Activated T-helper 2 cell treated with anti-CD3 and anti-CD28 coated beads, Interferon-gamma antibody, Interleukin-2, Interleukin-4, amounts not matched to agents 10 μg/mL and 5 μg/mL and 100 μg/mL, durations not matched to agents 14 hours and 24 hours and 36 hours (primary cell): ENCODE measurements at regions of chr5 and their contacts with region 1.

Region 1: DNA sequence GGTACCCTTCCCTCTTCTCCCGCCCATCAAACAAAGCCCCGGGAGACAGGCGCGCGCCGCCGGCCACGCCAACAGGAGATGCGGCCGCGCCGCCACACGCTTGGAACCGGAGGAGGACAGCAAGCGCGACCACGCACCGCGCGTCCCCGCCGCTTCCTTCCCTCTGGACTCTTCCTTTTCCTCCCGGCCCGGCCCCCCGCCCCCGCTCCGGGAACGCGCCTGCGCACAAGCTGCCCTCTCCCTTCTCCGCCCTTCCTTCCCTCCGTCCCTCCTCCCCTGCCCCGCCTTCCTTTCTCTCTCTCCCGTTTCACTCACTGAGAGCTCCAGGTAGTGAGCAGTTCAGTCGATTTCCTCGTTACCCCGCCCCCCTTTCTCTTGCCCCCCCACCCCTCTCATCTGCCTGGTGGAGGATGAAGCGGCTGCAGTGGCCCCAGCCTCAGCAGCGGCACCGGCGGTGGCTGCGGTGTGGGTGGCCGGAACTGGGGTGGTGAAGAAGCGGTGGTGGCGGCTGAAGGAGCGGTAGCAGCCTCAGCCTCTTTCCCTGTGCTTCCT is at the start of gene RASA1:
- DNase-seq: peak; percentile 74
- H3K4me3 Mint-ChIP-seq: peak within 1 kb of the TSS; percentile 94
- H3K27ac Mint-ChIP-seq: peak within 1 kb of the TSS; percentile 90
- H3K4me1 Mint-ChIP-seq: peaks cover 25% of the 10 kb centered on the region
- H3K27me3 Mint-ChIP-seq: peaks cover 4% of the 10 kb centered on the region
- total RNA-seq, gene RASA1: 21.1 and 21.9 TPM in 2 replicates

Region 2: DNA sequence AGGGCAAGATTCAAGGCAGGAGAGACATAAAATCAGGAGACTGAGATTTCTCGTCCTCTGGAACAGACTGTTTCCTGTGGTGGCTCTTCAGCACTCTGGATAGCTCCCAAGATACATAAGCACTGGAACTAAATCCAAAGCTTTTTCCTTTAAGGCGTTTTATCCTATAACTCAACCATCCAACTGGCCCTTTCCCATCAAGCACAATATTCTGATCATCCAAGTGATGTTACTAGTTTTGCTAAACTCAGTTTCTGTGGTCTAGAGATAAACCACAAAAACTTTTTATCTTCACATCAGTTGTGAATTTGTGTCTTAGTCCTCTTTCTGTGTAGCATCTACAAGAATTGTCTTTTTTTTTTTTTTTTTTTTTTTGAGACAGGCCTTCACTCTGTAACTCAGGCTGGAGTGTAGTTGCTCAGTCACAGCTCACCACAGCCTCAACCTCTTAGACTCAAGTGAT is 350.5 kb before region 1 on chr5:
- intact Hi-C with region 1: loop called (anchors 5 kb)
- DNase-seq: peak; percentile 8
- H3K4me3 Mint-ChIP-seq: no peak overlapping the region
- H3K27ac Mint-ChIP-seq: no peak overlapping the region
- H3K4me1 Mint-ChIP-seq: peaks cover 19% of the 10 kb centered on the region
- H3K27me3 Mint-ChIP-seq: peaks cover 27% of the 10 kb centered on the region

Region 3: GRCh38 chr5:87081511-87082372 is 185.9 kb before region 1 on chr5:
- intact Hi-C with region 1: loop called (anchors 5 kb)
- DNase-seq: peak; percentile 30
- H3K4me3 Mint-ChIP-seq: peak overlapping the region; percentile 41
- H3K27ac Mint-ChIP-seq: peak overlapping the region; percentile 54
- H3K4me1 Mint-ChIP-seq: peaks cover 41% of the 10 kb centered on the region
- H3K27me3 Mint-ChIP-seq: no peaks in the 10 kb centered on the region

Region 4: GRCh38 chr5:87243166-87243844 is 24.3 kb before region 1 on chr5:
- intact Hi-C with region 1: no loop called
- DNase-seq: no peak
- H3K4me3 Mint-ChIP-seq: no peak overlapping the region
- H3K27ac Mint-ChIP-seq: no peak overlapping the region
- H3K4me1 Mint-ChIP-seq: peaks cover 2% of the 10 kb centered on the region
- H3K27me3 Mint-ChIP-seq: no peaks in the 10 kb centered on the region

Region 5: GRCh38 chr5:87282269-87282668 is 14.6 kb after region 1 on chr5:
- intact Hi-C with region 1: loop called (anchors 2 kb)
- DNase-seq: no peak
- H3K4me3 Mint-ChIP-seq: peak overlapping the region; percentile 64
- H3K27ac Mint-ChIP-seq: peak overlapping the region; percentile 74
- H3K4me1 Mint-ChIP-seq: peaks cover 40% of the 10 kb centered on the region
- H3K27me3 Mint-ChIP-seq: no peaks in the 10 kb centered on the region

Region 6: GRCh38 chr5:87300744-87301143 is 33.1 kb after region 1 on chr5:
- intact Hi-C with region 1: loop called (anchors 1 kb)
- DNase-seq: no peak
- H3K4me3 Mint-ChIP-seq: no peak overlapping the region
- H3K27ac Mint-ChIP-seq: no peak overlapping the region
- H3K4me1 Mint-ChIP-seq: peaks cover 57% of the 10 kb centered on the region
- H3K27me3 Mint-ChIP-seq: no peaks in the 10 kb centered on the region

Region 7: DNA sequence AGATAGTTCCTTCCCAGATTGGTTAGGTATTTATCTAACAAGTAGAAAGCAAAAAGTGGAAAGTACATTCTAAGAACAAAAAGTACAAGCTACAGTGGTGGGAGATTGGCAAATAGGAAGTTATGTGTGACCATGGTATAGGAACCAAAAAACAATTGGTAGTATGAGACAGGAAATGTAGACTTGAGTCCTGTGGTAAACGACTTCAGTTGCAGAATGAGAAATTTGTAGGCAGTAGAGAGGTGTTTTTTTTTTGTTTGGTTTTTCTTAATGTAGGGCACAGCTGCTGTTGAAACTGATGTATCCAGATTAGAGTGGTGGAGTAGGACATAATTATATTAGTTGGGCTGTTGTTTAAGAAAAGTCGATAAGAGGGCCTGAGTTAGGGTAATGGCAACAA is 73.1 kb after region 1 on chr5:
- intact Hi-C with region 1: loop called (anchors 1 kb)
- DNase-seq: no peak
- H3K4me3 Mint-ChIP-seq: peak overlapping the region; percentile 64
- H3K27ac Mint-ChIP-seq: peak overlapping the region; percentile 82
- H3K4me1 Mint-ChIP-seq: peaks cover 27% of the 10 kb centered on the region
- H3K27me3 Mint-ChIP-seq: no peaks in the 10 kb centered on the region

Region 8: DNA sequence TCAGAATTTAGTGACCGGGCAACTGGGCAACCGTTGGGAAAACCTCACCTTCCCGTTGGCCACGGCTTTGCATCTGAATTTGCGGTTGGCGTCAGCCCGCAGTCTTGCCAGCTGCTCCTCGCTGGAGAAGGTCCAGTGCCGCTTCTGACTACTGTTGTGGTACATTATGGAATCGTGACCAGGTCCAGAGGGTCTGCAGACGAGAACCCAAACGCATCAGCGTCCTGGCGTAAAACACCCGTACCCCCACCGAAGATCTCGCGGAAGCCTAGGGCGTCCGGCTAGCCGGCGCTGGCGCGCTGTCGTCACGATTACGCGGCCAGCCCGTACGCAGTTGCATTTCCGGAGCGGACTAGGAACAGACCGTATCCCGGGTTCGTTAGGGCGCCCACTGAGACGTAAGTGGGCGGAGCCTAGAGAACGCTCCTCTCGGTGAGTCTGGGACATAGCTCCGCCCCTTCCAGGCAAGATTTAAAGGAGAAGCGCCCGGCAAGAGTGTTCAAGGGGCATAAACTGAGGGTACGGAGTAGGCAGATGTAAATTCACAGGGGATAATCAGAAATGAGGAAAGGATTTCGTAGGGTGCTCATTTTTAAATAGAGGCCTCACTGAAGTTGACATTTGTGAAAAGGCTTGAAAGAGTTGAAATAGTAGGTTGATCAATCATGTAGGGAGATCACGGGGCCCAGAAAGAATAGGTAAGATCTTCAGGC is 145.1 kb after region 1 on chr5 and contains the start of gene CCNH:
- intact Hi-C with region 1: loop called (anchors 2 kb)
- DNase-seq: peak; percentile 95
- H3K4me3 Mint-ChIP-seq: peak within 1 kb of the TSS; percentile 99
- H3K27ac Mint-ChIP-seq: peak within 1 kb of the TSS; percentile 96
- H3K4me1 Mint-ChIP-seq: peaks cover 26% of the 10 kb centered on the region
- H3K27me3 Mint-ChIP-seq: peaks cover 4% of the 10 kb centered on the region
- total RNA-seq, gene CCNH: 68.2 and 70.1 TPM in 2 replicates